ENCODE measurements at regions of chr4 and their contacts with region 1.

Region 1: DNA sequence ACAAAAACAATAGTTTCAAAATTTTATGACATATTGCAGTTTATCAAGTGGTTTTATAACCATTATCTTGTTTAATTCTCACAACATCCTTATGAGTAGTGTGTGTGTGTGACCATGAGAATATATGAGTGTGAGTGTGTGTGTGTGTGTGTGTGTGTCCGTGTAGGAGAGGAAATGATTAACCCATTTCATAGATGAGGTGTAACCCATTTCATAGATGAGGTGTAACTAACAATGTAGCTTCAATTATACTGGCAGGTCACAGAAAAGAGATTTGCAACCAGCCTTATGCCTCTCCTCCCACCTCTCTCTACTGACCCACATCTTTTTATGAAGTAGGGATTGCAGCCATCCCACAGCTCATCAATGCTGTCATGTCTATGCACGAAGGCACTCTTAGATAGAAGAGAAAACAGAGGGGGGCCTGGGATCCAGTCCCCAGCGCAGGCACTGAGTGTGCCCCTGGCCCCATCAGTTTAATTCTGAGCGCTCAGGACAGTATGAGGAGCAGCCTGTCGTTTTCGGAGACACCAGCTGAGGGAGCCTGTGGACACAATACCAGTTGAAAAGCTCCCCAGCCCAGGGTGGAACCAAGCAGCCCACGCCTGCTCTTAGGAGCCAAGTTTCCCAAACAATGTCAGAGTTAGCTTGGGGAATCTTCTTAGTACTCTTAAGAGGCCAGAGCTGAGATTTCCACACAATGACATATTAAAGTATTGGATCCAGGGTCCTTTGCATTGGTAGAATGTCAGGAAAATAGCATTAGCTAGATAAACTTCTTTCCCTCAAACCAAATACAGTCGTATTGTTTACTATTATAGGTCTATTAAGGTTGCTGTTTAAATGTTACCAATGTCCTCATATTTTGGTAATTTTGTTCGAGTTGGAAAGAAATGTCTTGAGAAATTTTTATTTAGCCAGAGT is 88.6 kb downstream of the PALLD start:
- DNase-seq: no peak
- H3K4me3 ChIP-seq: no peak overlapping the region
- H3K27ac ChIP-seq: peak overlapping the region in 1 of 4 donors; percentile 38
- H3K4me1 ChIP-seq: peaks cover 21 to 48% (median 34%) of the 10 kb centered on the region in 4 donors
- H3K27me3 ChIP-seq: no peaks in the 10 kb centered on the region
- CTCF ChIP-seq: peak; percentile 83 to 88 (median 86)
- EP300 ChIP-seq: no peak
- POLR2A ChIP-seq: no peak

Region 2: GRCh38 chr4:168631241-168632162 is 46.1 kb after region 1 on chr4:
- intact Hi-C with region 1: loop called (anchors 5 kb)
- DNase-seq: no peak
- H3K4me3 ChIP-seq: peak overlapping the region; percentile 58 to 74 (median 64)
- H3K27ac ChIP-seq: peak overlapping the region; percentile 73 to 77 (median 76)
- H3K4me1 ChIP-seq: peaks cover 35 to 48% (median 36%) of the 10 kb centered on the region in 4 donors
- H3K27me3 ChIP-seq: no peaks in the 10 kb centered on the region
- CTCF ChIP-seq: peak; percentile 34 to 66 (median 44)
- EP300 ChIP-seq: no peak
- POLR2A ChIP-seq: no peak

Region 3: GRCh38 chr4:168694648-168695047 is 109.2 kb after region 1 on chr4:
- intact Hi-C with region 1: loop called (anchors 5 kb)
- DNase-seq: no peak
- H3K4me3 ChIP-seq: no peak overlapping the region
- H3K27ac ChIP-seq: no peak overlapping the region
- H3K4me1 ChIP-seq: peaks cover 0 to 6% (median 0%) of the 10 kb centered on the region in 4 donors
- H3K27me3 ChIP-seq: no peaks in the 10 kb centered on the region
- CTCF ChIP-seq: no peak
- EP300 ChIP-seq: no peak
- POLR2A ChIP-seq: no peak

Region 4: GRCh38 chr4:168710353-168710946 is 125.0 kb after region 1 on chr4:
- intact Hi-C with region 1: loop called (anchors 2 kb)
- DNase-seq: no peak
- H3K4me3 ChIP-seq: no peak overlapping the region
- H3K27ac ChIP-seq: peak overlapping the region; percentile 75 to 82 (median 79)
- H3K4me1 ChIP-seq: peaks cover 19 to 43% (median 29%) of the 10 kb centered on the region in 4 donors
- H3K27me3 ChIP-seq: no peaks in the 10 kb centered on the region
- CTCF ChIP-seq: peak; percentile 68 to 74 (median 72)
- EP300 ChIP-seq: no peak
- POLR2A ChIP-seq: no peak

Region 5: DNA sequence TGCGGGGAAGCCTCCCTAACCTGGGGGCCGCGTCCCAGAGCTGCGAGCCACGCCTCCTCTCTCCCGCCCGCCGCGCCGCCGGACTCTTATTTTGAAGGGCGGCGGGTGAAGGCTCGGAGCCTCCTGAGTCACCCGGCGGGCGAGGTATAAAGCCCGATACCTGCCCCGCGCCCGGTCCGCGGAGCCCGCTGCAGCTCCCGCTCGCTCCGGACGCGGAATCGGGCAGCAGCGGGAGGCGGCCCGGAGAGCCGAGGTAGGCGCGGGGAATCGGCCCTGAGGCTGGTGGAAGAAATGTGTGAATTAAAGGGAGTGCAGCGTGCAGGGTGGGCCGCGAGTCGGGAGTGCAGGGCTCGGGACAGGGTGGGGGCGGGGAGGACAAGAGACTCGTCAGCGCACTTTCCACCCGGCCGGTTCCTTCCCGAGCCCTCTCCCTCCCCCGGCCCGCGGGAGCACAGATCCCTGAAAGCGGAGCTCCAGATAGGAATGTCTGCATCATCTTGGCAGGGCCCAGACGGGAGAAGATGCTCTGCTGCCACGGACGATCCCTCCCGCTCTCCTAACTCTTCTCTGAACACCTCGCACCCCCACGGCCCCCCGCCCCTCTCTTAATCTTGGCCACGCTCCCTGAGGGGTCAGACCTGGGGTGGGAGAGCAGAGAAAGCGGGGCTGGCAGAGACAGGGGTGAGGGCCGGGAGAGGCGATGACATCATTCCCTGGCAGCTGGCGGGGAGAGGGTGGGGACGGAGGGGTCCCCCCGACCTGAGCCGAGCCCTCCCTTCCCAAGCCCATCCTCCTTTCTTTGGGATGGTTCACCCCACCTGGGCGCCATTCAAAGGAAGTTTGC is 246.7 kb after region 1 on chr4:
- intact Hi-C with region 1: loop called (anchors 5 kb)
- DNase-seq: peak; percentile 95
- H3K4me3 ChIP-seq: peak overlapping the region; percentile 79 to 96 (median 90)
- H3K27ac ChIP-seq: peak overlapping the region; percentile 97 to 99 (median 99)
- H3K4me1 ChIP-seq: peaks cover 4 to 28% (median 23%) of the 10 kb centered on the region in 4 donors
- H3K27me3 ChIP-seq: peaks cover 0 to 4% (median 0%) of the 10 kb centered on the region in 4 donors
- CTCF ChIP-seq: peak in 1 of 3 experiments; percentile 4
- EP300 ChIP-seq: peak; percentile 14
- POLR2A ChIP-seq: peak; percentile 89

Region 6: DNA sequence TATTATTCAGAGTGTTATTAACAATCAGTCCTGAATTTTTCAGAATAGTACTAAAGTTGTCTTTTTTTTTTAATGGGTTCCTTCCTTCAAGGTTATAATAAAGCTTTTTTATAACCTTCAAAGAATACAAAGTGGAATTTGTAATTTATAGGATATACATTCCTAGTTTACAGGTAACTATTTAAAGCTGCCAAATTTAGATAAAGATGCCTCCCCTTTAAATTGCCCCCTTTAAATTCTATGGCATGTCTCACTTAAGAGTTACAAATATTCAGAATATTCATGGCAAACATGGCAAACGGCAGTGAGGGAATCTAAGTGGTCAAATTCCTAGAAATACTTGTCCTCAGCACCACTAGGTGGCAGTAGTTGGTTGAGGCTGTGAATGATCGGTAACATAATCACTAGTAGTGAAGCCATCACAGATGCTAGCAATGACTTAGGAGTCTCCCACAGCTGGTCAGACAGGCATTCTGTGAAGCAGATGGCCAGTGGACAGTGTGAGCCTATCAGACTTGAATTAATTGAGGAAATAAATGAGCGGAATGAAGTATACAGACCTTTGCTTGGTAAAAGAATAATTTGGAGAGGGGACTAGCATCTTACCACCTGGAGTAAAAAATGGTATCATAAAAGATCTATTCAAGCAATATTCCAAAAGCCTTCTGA is 338.2 kb after region 1 on chr4:
- intact Hi-C with region 1: loop called (anchors 5 kb)
- DNase-seq: no peak
- H3K4me3 ChIP-seq: no peak overlapping the region
- H3K27ac ChIP-seq: peak overlapping the region; percentile 13 to 56 (median 34)
- H3K4me1 ChIP-seq: peaks cover 7 to 29% (median 23%) of the 10 kb centered on the region in 4 donors
- H3K27me3 ChIP-seq: no peaks in the 10 kb centered on the region
- CTCF ChIP-seq: peak; percentile 48 to 65 (median 58)
- EP300 ChIP-seq: no peak
- POLR2A ChIP-seq: no peak

Region 7: DNA sequence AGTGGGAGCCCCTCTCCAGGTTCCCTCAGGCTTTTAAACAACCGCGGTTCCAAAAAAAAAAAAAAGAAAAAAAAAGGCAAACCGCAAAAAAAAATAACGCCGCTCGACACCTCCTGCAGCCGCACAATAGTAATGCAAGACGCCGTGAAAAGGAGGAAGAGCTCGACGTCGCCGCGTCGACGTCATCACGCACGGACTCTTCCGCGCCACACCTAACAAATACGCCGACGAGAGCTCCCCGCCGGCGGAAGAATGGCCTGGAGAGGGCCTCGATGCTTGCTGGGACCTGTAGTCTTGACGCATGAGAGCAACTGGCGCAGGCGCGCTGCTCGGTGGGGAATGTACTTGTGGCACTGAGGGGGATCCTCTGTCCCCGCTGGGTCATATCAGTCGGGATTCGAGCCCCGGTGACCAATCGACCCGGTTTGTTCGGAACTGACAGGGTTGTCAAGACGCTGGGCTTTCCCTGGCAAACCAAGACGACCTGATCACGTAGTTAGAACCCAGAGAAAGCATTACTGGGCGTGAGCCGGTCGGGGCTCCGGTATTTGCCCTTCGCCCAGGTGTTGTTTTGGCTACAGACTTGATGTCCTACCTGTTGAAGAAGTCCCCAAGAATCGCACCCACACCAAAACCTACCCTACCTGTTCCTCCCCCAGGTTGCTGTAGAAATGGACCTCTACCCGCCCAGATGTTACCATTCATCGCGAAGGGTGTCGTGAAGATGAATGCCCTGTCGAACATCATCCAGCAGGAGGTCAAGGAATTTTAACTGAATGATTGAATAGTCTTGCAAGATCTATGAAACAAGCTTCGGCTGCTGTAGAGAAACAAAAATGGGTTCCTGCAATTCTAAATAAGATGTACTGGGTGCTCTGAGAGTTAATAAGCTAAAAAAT is 424.9 kb after region 1 on chr4 and contains the start of gene CBR4:
- intact Hi-C with region 1: loop called (anchors 10 kb)
- DNase-seq: peak; percentile 99
- H3K4me3 ChIP-seq: peak within 1 kb of the TSS; percentile 58 to 71 (median 64)
- H3K27ac ChIP-seq: peak within 1 kb of the TSS; percentile 85 to 93 (median 89)
- H3K4me1 ChIP-seq: peaks cover 17 to 34% (median 28%) of the 10 kb centered on the region in 4 donors
- H3K27me3 ChIP-seq: no peaks in the 10 kb centered on the region
- CTCF ChIP-seq: peak in 1 of 3 experiments; percentile 54
- EP300 ChIP-seq: no peak
- POLR2A ChIP-seq: no peak
- total RNA-seq, gene CBR4: 9.3 to 15.8 (median 12.4) TPM

Measured in esophagus muscularis mucosa (tissue), 4 donors.